PC-3 (cell line): ENCODE measurements at regions of chr3 and their contacts with region 1.

Region 1: DNA sequence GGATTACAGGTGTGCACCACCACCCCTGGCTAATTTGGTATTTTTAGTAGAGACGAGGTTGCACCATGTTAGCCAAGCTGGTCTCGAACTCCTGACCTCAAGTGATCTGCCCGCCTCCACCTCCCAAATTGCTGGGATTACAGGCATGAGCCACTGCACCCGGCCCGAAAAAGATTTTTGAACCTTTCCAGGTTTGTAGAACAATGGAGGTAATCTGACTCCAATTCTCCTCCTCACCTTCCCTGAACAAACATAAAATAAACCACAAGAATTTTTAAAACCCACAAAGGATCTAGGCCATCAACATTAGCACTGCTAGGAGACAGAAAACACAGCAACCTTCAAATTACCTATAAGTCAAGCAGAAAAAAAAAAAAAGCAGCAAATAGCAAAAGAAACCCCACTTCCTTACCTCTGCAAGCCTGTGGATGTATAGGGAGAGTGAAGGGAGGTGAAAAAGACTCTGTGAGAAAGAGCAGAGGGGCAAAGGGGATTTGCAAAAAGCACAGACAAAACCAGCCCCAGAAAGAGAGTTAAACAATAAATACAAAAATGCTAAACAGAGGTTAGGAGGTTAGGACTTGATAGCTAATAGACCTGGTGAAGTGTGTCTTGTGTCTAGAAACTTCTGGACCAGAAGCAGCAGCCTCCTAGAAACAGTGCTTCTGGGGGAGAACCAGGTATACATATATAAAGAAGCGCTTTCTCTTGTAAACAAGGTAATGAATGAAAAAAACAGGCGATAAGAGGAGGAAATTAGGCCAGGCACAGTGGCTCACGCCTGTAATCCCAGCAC is 32.1 kb downstream of the TFDP2 start:
- DNase-seq: peak; percentile 82
- ATAC-seq: peak; percentile 96
- H3K4me3 ChIP-seq: no peak overlapping the region
- H3K27ac ChIP-seq: no peak overlapping the region
- H3K4me1 ChIP-seq: peaks cover 12% of the 10 kb centered on the region
- H3K27me3 ChIP-seq: no peaks in the 10 kb centered on the region
- CTCF ChIP-seq: no peak

Region 2: DNA sequence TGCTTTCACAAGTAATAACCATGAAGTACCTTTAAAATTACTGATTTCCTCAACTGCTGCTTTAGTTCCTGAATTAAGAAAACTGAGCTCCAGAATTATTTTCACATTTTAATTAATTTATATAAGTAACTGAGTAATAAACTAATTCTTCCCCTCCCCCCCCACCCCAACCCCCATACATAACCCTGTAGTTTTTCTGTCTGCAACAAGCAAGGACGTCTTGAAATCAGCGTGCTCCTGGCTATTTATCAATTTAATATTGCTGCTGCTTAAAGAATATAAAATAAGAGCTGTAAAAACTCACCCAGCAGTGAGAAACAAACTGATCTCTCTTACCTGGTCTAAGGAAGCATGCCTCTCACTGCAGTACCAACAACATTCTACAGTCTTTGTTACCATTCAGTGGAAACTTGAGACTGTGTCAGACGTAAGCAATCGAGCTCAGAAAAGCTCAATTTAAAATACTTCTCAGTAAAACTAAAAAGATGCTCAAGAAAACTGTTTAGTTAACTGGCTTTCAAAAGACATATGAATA is 88.9 kb before region 1 on chr3:
- CTCF ChIA-PET with region 1: no interaction called
- POLR2A ChIA-PET with region 1: no interaction called
- intact Hi-C with region 1: loop called (anchors 2 kb)
- DNase-seq: peak; percentile 70
- ATAC-seq: peak; percentile 85
- H3K4me3 ChIP-seq: peak overlapping the region; percentile 67
- H3K27ac ChIP-seq: no peak overlapping the region
- H3K4me1 ChIP-seq: no peaks in the 10 kb centered on the region
- H3K27me3 ChIP-seq: no peaks in the 10 kb centered on the region
- CTCF ChIP-seq: no peak

Region 3: GRCh38 chr3:142056656-142057330 is 60.5 kb before region 1 on chr3:
- CTCF ChIA-PET with region 1: no interaction called
- POLR2A ChIA-PET with region 1: no interaction called
- intact Hi-C with region 1: no loop called
- DNase-seq: no peak
- ATAC-seq: no peak
- H3K4me3 ChIP-seq: no peak overlapping the region
- H3K27ac ChIP-seq: no peak overlapping the region
- H3K4me1 ChIP-seq: no peaks in the 10 kb centered on the region
- H3K27me3 ChIP-seq: no peaks in the 10 kb centered on the region
- CTCF ChIP-seq: no peak

Region 4: GRCh38 chr3:143786219-143787191 is 1669.3 kb after region 1 on chr3:
- CTCF ChIA-PET with region 1: no interaction called
- POLR2A ChIA-PET with region 1: no interaction called
- intact Hi-C with region 1: no loop called
- DNase-seq: no peak
- ATAC-seq: no peak
- H3K4me3 ChIP-seq: no peak overlapping the region
- H3K27ac ChIP-seq: no peak overlapping the region
- H3K4me1 ChIP-seq: no peaks in the 10 kb centered on the region
- H3K27me3 ChIP-seq: no peaks in the 10 kb centered on the region
- CTCF ChIP-seq: no peak